ENCODE measurements at regions of chr15 and their contacts with region 1.

Region 1: GRCh38 chr15:29821416-29822131 is 694 bp downstream of the TJP1 start:
- DNase-seq: peak; percentile 82
- ATAC-seq: peak; percentile 32 to 50

Region 2: GRCh38 chr15:29904757-29905417 is 83.3 kb after region 1 on chr15:
- intact Hi-C with region 1: loop called in 1 of 2 experiments (anchors 10 kb)
- DNase-seq: no peak
- ATAC-seq: no peak